ENCODE measurements at regions of chr5 and their contacts with region 1.

Region 1: GRCh38 chr5:54243473-54244080 is 66.8 kb downstream of the ARL15 start:
- DNase-seq: peak in 1 of 5 donors; percentile 16
- H3K4me3 ChIP-seq: no peak overlapping the region
- H3K4me3 Mint-ChIP-seq: no peak overlapping the region
- H3K27ac ChIP-seq: no peak overlapping the region
- H3K27ac Mint-ChIP-seq: no peak overlapping the region
- H3K4me1 ChIP-seq: no peaks in the 10 kb centered on the region
- H3K4me1 Mint-ChIP-seq: peaks cover 11 to 18% (median 12%) of the 10 kb centered on the region in 3 donors
- H3K27me3 ChIP-seq: no peaks in the 10 kb centered on the region
- H3K27me3 Mint-ChIP-seq: no peaks in the 10 kb centered on the region

Region 2: DNA sequence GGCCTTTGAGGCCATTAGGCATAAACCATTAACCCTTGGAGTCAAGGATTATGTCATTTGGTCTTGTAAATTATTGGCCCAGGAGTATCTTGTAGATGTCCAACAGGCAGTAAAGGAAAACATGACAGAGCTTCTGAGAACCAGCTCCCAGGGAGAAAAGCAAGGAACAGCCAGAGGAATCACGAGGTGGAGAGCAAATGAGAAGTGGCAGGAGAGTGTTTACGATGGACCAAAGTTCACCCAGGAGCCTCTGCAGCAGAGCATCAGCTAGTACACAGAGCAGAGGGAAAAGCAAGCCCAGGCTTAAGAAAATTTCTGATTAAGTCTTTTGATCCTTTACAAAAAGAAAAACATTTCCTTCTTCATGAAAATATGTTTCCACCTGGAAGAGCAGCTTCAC is 476.9 kb before region 1 on chr5:
- CTCF ChIA-PET with region 1: no interaction called
- POLR2A ChIA-PET with region 1: no interaction called
- DNase-seq: no peak
- H3K4me3 ChIP-seq: no peak overlapping the region
- H3K4me3 Mint-ChIP-seq: no peak overlapping the region
- H3K27ac ChIP-seq: no peak overlapping the region
- H3K27ac Mint-ChIP-seq: no peak overlapping the region
- H3K4me1 ChIP-seq: no peaks in the 10 kb centered on the region
- H3K4me1 Mint-ChIP-seq: no peaks in the 10 kb centered on the region
- H3K27me3 ChIP-seq: no peaks in the 10 kb centered on the region
- H3K27me3 Mint-ChIP-seq: peaks cover 7 to 17% of the 10 kb centered on the region in 2 donors

Region 3: DNA sequence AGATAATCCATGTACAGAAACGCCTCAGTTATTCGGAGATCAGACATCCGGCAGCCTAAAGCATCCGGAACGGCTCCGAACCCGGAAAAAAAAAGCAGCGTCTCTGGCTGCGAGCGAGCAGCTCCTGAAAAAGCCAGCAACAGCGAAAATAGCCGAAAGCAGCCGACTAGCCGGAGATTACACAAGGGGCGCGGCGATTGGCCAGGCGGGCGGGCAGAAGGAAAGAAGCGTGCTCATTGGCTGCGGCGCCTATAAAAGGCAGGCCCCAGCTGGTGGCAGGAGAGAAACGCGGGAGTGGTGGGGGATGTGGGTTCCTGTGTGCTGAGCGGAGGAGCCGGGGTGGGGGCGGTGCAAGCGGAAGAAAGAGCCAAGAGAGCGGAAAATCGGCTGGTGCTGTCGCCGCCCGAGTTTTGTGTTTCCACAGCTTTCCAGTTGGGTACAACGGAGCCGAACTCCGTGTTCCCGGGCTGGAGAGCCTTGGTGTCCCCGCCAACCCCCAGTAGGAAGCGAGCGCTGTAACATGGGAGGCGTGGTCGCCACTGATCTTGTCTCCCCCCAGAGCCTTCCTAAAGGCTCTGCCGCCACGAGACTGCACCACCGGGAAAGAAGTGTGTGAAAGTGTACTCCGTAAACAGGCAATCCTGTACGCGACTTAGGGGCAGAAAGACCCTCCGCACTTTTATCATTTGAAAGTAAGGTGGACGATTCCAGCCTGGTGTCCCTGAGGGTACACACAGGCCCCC is 67.0 kb after region 1 on chr5 and contains the start of gene ARL15:
- CTCF ChIA-PET with region 1: interaction called, 13 read pairs
- POLR2A ChIA-PET with region 1: no interaction called
- DNase-seq: peak; percentile 97 to 99 (median 97)
- H3K4me3 ChIP-seq: peak within 1 kb of the TSS; percentile 87
- H3K4me3 Mint-ChIP-seq: peak within 1 kb of the TSS; percentile 91 to 99 (median 95)
- H3K27ac ChIP-seq: peak within 1 kb of the TSS; percentile 88
- H3K27ac Mint-ChIP-seq: peak within 1 kb of the TSS; percentile 81 to 98 (median 92)
- H3K4me1 ChIP-seq: peaks cover 13% of the 10 kb centered on the region
- H3K4me1 Mint-ChIP-seq: peaks cover 18 to 41% (median 37%) of the 10 kb centered on the region in 3 donors
- H3K27me3 ChIP-seq: no peaks in the 10 kb centered on the region
- H3K27me3 Mint-ChIP-seq: peaks cover 9 to 13% of the 10 kb centered on the region in 2 donors
- total RNA-seq, gene ARL15: 5.6 to 6.5 TPM

Region 4: DNA sequence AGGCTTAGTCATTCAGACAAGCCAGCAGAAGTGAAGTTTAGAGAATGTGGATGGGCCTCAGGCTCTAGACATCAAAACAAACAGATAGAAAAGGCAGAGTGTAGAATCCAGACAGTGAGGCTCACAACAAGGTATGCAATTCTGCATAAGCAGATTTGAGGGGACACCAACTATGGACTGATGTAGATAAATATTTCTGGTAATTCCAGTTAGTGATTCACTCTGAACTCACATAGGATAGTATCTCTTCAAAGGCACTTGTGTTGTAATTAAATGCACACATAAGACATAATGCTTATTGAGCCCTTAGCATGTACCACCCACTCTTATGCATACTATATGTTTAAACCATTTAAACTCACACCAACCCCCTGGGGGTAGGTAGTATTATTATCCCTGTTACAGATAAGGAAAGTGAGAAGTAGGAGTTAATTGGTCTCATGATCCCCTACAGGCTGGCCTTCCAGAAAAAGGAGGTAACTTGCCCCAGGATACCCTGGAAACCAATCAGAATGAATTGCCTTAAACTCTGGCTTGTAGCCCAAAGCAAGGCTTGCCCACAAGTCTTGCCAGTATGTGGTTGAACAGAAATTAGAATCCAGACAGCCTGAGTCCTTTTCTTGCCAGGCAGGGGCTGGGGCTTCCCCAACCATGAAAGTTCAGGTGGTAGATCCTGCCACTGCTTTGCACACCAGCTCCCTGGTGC is 172.5 kb after region 1 on chr5:
- CTCF ChIA-PET with region 1: interaction called, 13 read pairs
- POLR2A ChIA-PET with region 1: no interaction called
- DNase-seq: no peak
- H3K4me3 ChIP-seq: no peak overlapping the region
- H3K4me3 Mint-ChIP-seq: no peak overlapping the region
- H3K27ac ChIP-seq: no peak overlapping the region
- H3K27ac Mint-ChIP-seq: no peak overlapping the region
- H3K4me1 ChIP-seq: no peaks in the 10 kb centered on the region
- H3K4me1 Mint-ChIP-seq: no peaks in the 10 kb centered on the region
- H3K27me3 ChIP-seq: no peaks in the 10 kb centered on the region
- H3K27me3 Mint-ChIP-seq: peaks cover 2 to 16% of the 10 kb centered on the region in 2 donors

Measured in CD8-positive, alpha-beta memory T cell (primary cell).